ENCODE measurements at regions of chr4 and their contacts with region 1.

Region 1: GRCh38 chr4:183659029-183659871 is at the starts of genes RWDD4 and TRAPPC11:
- DNase-seq: peak; percentile 99
- H3K4me3 ChIP-seq: peak within 1 kb of the TSS; percentile 74 to 98 (median 89)
- H3K27ac ChIP-seq: peak within 1 kb of the TSS; percentile 86 to 94 (median 91)
- H3K4me1 ChIP-seq: peaks cover 20 to 49% (median 43%) of the 10 kb centered on the region in 4 donors
- H3K27me3 ChIP-seq: no peaks in the 10 kb centered on the region
- CTCF ChIP-seq: peak in 2 of 3 experiments; percentile 32 to 48
- EP300 ChIP-seq: no peak
- POLR2A ChIP-seq: peak; percentile 90
- total RNA-seq, gene RWDD4: 30.5 to 40.3 (median 30.9) TPM
- total RNA-seq, gene TRAPPC11: 35.6 to 42.8 (median 39.7) TPM

Region 2: DNA sequence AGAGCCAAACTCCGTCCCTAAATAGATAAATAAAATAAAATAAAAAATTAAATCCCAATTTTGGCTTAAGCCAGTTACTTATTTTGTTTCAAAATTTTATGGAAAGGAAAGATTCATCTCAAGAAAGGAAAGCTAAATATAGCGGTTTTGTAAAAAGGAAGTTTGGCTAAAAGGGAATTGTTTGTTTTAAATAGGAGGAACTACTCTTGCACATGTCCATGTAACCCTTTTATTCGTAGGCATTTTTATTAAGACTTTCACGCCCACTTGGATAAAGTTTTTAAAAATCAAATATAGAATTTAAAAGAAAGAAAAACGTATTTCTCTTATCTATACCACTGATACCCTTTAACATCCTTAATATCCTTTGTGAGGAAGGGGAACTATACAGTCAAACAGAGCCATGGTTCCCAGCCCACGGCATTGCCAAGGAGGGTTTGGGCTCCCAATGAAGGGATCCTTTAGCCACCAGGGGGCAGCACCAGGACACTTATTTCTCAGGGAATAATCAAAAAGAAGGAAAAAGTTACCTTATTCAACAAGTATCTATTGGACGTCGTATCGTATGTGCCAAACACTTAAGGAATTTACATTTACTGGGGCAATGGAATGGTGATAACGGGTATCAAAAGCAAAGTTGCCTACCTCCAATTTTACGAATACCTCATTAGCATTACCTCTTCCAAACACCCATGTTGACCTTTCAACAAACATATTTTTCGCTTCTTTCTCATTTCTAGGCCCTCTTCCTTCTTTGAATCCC is 187.1 kb before region 1 on chr4:
- intact Hi-C with region 1: loop called (anchors 2 kb)
- DNase-seq: peak; percentile 97
- H3K4me3 ChIP-seq: peak overlapping the region in 3 of 4 donors; percentile 1 to 25 (median 19)
- H3K27ac ChIP-seq: no peak overlapping the region
- H3K4me1 ChIP-seq: peaks cover 0 to 7% (median 2%) of the 10 kb centered on the region in 4 donors
- H3K27me3 ChIP-seq: peaks cover 0 to 4% (median 0%) of the 10 kb centered on the region in 4 donors
- CTCF ChIP-seq: peak; percentile 77 to 89 (median 89)
- EP300 ChIP-seq: no peak
- POLR2A ChIP-seq: no peak

Region 3: DNA sequence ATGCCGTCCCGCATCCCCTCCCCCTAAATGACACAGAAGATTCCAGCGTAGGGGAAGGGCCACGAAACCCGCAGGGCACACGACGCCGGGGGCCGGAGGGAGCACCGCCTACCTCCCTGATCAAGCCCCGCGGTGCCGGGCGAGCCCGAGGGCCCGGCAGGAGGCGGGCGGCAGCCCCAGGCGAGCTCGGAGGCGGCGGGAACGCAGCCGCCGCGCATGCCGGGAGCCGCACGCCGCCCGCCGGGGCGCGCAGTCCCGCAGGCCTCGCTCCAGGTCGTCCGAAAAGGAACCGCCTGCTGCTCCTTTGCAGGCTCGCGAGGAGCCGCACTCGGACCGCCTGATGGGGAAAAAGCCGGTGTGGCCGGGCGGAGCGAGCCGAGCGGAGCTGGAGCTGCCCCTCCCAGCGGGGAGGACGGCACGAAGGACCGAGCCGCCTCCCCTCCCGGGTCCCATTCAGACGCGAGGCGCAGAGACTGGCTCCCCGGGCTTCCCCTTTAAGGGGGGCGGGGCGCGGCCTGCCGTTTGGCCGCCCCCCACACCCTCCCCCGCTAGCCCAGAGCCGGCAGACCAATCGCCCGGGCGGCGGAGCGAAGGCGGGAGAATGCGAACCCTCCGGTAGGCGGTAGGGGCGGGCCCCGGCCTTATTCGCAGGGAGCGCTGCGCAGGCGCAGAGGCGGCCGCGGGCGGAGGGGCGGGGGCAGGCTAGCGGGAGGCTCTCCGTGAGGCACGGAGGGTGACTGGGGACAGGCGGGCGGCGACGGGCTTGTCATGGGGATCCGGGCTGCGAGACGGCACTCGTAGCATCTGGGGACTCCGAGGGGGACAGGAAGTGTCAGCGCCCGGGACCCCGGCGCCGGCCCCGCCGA is 155.0 kb before region 1 on chr4:
- intact Hi-C with region 1: loop called (anchors 5 kb)
- DNase-seq: peak; percentile 99
- H3K4me3 ChIP-seq: peak overlapping the region; percentile 75 to 100 (median 98)
- H3K27ac ChIP-seq: peak overlapping the region; percentile 96 to 99 (median 98)
- H3K4me1 ChIP-seq: peaks cover 8 to 46% (median 45%) of the 10 kb centered on the region in 4 donors
- H3K27me3 ChIP-seq: no peaks in the 10 kb centered on the region
- CTCF ChIP-seq: peak; percentile 39 to 49 (median 45)
- EP300 ChIP-seq: no peak
- POLR2A ChIP-seq: peak; percentile 54

Region 4: DNA sequence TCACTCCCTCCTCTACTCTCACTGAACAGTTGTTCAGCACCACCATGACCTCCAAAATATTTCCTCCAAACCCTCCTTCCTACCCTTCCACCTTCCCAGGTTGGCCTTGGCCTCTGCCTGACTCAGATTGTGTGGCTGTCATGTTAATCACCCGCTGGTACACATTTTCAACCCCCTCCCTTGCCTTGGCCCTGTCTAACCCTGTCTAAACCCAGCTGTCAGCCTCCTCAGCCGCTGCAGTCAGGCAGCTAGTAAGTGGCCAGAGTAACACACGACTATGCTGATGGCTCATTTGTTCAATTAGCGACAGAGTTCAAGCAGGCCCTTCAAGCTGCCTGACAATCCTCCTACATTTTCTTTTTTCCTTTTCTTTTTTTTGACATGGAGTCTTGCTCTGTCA is 136.4 kb before region 1 on chr4:
- intact Hi-C with region 1: no loop called
- DNase-seq: no peak
- H3K4me3 ChIP-seq: no peak overlapping the region
- H3K27ac ChIP-seq: no peak overlapping the region
- H3K4me1 ChIP-seq: peaks cover 0 to 7% (median 3%) of the 10 kb centered on the region in 4 donors
- H3K27me3 ChIP-seq: no peaks in the 10 kb centered on the region
- CTCF ChIP-seq: no peak
- EP300 ChIP-seq: no peak
- POLR2A ChIP-seq: no peak

Region 5: DNA sequence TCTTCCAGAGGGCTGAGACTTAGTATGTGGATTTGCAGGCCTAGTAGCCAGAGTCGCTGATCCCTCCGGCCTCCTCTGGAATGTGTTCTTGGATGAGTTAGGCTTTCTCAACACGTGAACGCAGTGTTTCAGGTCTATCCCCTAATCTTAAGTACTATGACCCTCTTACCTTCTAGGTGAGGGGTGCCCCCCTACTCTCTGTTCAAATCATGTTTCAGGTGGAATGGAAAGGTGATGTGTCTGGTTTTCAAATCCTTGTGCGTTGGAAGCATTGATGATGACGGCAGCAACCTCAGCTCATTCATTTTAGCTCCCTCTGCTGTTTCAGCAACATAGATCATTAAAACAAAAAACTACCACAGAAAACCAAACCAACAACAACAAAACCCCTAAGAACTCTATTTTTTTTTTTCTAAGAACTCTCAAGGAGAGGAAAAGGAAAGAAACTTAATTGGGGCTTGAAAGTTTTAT is 56.7 kb before region 1 on chr4:
- intact Hi-C with region 1: loop called (anchors 10 kb)
- DNase-seq: no peak
- H3K4me3 ChIP-seq: no peak overlapping the region
- H3K27ac ChIP-seq: peak overlapping the region in 2 of 4 donors; percentile 5 to 42
- H3K4me1 ChIP-seq: peaks cover 0 to 12% (median 11%) of the 10 kb centered on the region in 4 donors
- H3K27me3 ChIP-seq: no peaks in the 10 kb centered on the region
- CTCF ChIP-seq: peak; percentile 51 to 53 (median 52)
- EP300 ChIP-seq: no peak
- POLR2A ChIP-seq: no peak

Region 6: GRCh38 chr4:183783306-183783705 is 124.1 kb after region 1 on chr4:
- intact Hi-C with region 1: no loop called
- DNase-seq: no peak
- H3K4me3 ChIP-seq: no peak overlapping the region
- H3K27ac ChIP-seq: no peak overlapping the region
- H3K4me1 ChIP-seq: peaks cover 0 to 12% (median 5%) of the 10 kb centered on the region in 4 donors
- H3K27me3 ChIP-seq: peaks cover 0 to 4% (median 0%) of the 10 kb centered on the region in 4 donors
- CTCF ChIP-seq: no peak
- EP300 ChIP-seq: no peak
- POLR2A ChIP-seq: no peak